Panc1 (cell line): ENCODE measurements at regions of chr16 and their contacts with region 1.

Region 1: DNA sequence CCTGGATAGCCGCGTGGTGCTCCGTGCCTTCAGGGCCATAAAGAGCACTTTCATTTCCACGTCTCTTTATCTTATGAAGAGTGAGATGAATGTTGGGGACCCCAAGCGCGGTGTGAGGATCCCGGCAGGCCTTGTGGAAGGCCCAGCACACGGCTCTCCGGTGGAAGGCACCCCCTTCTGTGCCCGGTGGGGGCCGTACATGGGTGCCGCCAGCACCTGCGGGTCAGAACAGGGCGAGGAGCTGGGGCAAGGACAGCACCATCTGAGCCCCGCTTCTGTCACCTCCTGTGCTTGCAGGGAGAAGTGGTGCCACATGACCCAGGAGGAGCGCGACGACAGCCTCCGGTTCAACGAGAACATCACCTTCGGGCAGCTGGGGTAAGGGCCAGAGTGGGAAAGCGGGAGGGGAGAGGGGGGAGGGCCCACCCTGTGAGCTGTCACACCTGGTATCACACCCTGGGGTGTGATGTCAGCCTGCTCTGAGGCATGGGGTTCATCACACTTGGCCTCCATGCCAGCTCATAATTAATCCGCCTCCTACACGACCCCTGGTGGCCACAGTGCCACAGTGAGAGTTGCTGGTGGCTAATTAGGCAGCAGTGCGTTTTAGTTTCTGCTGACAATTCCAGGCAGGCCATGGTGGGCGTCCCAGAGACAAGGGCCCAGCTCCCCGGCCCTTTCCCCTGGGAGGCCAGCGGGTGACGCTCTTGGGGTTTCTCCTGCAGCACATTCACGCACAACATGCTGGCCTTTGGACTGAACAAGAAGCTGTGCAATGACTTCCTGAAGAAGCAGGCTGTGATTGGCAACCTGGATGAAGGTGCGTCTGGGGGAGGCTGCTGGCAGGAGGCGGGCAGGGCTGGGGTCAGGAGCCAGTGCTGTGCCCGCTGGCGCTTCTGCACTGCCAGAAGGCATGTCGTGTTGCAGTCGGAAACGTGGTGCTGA is 25.7 kb downstream of the CIBAR2 start:
- DNase-seq: peak; percentile 32
- ATAC-seq: peak; percentile 83
- H3K4me3 ChIP-seq: no peak overlapping the region
- H3K27ac ChIP-seq: no peak overlapping the region
- H3K4me1 ChIP-seq: no peaks in the 10 kb centered on the region
- H3K27me3 ChIP-seq: no peaks in the 10 kb centered on the region
- CTCF ChIP-seq: peak; percentile 85

Region 2: DNA sequence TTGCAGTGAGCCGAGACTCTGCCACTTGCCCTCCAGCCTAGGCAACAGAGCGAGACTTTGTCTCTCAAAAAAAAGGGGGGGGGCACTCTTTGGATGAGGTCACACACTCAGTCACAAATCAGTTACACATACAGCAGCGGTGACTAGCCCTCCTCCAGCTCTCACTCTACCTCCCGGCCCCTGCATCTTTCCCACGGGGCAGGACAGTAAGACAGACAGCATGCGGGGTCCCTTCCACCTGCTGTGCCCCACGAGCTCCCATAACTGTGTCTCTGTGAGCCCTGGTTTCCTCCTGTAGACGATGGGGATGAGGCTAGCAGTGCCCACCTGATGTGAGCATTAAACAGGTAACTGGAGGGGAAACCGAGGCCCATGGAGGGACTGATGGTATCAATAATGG is 20.5 kb after region 1 on chr16:
- CTCF ChIA-PET with region 1: interaction called, 12 read pairs
- POLR2A ChIA-PET with region 1: no interaction called
- in situ Hi-C with region 1: no loop called
- intact Hi-C with region 1: no loop called
- DNase-seq: no peak
- ATAC-seq: no peak
- H3K4me3 ChIP-seq: no peak overlapping the region
- H3K27ac ChIP-seq: no peak overlapping the region
- H3K4me1 ChIP-seq: no peaks in the 10 kb centered on the region
- H3K27me3 ChIP-seq: no peaks in the 10 kb centered on the region
- CTCF ChIP-seq: no peak